ENCODE measurements at regions of chr19 and their contacts with region 1.

Region 1: DNA sequence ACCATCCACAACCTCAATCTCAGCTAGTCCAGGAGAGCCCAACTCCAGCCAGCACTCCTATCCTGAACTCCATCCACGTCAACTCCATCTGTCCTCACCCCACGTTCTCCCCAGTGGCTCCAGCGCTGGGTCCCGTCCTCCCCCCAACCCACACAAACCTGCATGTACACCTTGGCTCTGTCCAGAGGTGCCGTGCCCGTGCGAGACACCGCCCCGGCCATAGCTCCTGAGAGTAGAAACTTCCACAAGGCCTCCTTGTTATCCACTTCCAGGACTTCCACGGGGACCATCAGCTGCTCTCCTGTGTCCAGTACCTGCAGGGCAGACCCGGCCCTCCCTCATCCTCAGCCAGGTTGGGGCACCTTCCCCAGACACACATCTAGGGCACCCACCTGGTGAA is 1.7 kb downstream of the SLC25A41 start:
- DNase-seq: no peak
- H3K4me3 ChIP-seq: no peak overlapping the region
- H3K27ac ChIP-seq: no peak overlapping the region
- H3K4me1 ChIP-seq: no peaks in the 10 kb centered on the region
- H3K27me3 ChIP-seq: no peaks in the 10 kb centered on the region
- CTCF ChIP-seq: no peak
- POLR2A ChIP-seq: no peak

Region 2: GRCh38 chr19:6821639-6822310 is 389.9 kb after region 1 on chr19:
- intact Hi-C with region 1: loop called (anchors 2 kb)
- DNase-seq: peak in 1 of 2 donors; percentile 39
- H3K4me3 ChIP-seq: no peak overlapping the region
- H3K27ac ChIP-seq: no peak overlapping the region
- H3K4me1 ChIP-seq: no peaks in the 10 kb centered on the region
- H3K27me3 ChIP-seq: no peaks in the 10 kb centered on the region
- CTCF ChIP-seq: no peak
- POLR2A ChIP-seq: no peak

Measured in breast epithelium (tissue), 4 donors.